ENCODE measurements at regions of chr20 and their contacts with region 1.

Region 1: GRCh38 chr20:32524830-32525391 is 60.2 kb downstream of the NOL4L start:
- DNase-seq: no peak

Region 2: DNA sequence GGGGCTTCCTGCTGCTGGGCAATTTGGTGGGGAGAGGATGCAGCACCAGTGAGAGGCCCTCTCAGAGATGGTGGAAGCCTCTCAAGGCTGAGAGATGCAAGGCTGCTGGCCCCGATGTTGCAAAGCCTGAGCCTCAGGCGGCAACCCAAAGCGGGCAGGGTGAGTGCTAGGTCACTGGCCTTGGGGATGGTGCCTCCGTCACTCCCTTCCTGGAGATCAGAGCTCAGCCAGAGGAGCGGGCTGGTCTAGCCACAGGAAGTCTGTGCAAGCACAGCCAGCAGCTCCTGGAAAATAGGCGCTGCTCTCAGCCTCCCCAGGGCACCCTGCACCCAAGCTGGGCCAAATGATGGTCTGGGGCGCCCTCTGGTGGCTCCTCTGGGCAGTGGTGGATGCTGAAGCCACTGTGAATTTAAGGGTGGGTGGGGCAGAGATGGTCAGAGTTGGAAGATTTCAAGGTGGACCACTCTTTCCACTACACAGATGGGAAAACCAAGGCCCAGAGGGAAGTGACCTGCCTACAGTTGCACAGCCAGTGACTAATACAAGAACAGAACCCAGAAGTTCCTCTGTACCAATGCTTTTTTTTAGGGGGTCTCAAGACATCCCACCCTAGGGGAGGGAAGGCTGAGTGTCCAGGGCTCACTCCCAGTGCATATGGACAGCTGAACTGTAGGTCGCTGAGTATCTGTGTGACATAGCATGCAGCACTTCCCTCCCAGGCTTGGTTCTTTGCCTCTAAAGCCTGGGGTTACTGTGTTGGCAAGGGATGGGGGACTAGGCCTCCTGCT is 128.0 kb after region 1 on chr20:
- in situ Hi-C with region 1: loop called (anchors 5 kb)
- DNase-seq: peak; percentile 90

Region 3: GRCh38 chr20:32727683-32728082 is 202.8 kb after region 1 on chr20:
- in situ Hi-C with region 1: no loop called
- DNase-seq: no peak

Region 4: DNA sequence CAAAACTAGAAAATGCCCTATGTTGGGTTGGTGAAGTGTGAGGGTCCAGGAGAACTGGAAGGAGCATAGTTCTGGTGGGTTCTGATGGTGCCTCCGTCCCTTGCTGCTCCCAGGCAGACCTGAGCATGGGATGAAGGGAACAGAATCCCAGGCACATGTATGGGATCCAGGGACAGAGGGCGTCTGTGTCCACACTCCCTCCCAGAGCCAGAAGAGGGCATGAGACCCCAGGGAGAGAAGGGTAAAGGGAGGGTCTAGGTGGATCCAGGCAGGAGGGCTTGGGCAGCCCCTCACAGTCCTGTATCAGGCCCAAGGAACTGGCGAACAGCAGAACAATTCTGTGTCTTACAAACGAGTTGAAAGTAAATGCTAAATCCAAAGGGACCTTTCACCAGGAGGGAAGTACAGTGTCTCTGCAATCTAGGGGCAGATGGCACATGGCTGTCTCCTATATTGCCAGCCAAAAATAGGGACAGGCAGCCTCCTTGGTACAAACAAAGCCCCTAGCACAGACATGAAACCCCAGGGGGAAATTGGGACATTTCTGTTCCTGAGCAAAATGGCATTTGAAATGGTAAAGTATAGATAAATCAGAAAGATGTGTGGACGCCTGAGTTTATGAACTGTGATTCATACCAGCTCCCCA is 708.3 kb after region 1 on chr20:
- in situ Hi-C with region 1: no loop called
- DNase-seq: no peak

Measured in KBM-7 (cell line).